Right ventricle myocardium superior (tissue), 1 donor: ENCODE measurements at regions of chr5 and their contacts with region 1.

Region 1: GRCh38 chr5:175689147-175689991 is 31.5 kb downstream of the HRH2 start:
- DNase-seq: no peak
- ATAC-seq: peak; percentile 4

Region 2: DNA sequence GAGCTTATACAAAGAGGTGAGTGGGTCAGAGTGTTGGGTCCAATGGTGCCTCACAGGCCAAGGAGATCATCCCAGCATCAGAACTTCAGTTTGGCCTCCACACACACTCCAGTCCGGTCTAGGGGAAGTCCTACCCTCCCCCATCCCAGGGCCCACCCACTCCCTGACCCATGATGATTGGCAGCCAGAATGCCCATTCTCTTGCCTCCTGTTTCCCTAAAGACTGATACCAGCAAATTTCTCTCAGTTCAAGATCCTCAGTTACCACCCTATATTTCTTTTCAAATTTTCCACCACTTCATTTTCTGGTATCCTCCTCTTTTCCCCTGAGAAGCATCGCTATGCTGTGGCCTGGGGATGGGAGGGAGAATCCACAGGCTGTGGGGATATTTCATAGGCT is 267.3 kb before region 1 on chr5:
- intact Hi-C with region 1: no loop called
- DNase-seq: no peak
- ATAC-seq: no peak

Region 3: GRCh38 chr5:175572886-175573285 is 116.5 kb before region 1 on chr5:
- intact Hi-C with region 1: loop called (anchors 10 kb)
- DNase-seq: no peak
- ATAC-seq: peak; percentile 91